ENCODE measurements at regions of chr17 and their contacts with region 1.

Region 1: GRCh38 chr17:30093463-30094147 is 23.0 kb upstream of the NSRP1 start:
- DNase-seq: peak in 11 of 14 experiments; percentile 5 to 74 (median 24)
- ATAC-seq: peak; percentile 51
- H3K4me3 ChIP-seq: no peak overlapping the region
- H3K4me3 Mint-ChIP-seq: no peak overlapping the region
- H3K27ac ChIP-seq: no peak overlapping the region
- H3K27ac Mint-ChIP-seq: no peak overlapping the region
- H3K4me1 ChIP-seq: peaks cover 6% of the 10 kb centered on the region
- H3K4me1 Mint-ChIP-seq: peaks cover 6% of the 10 kb centered on the region
- H3K27me3 ChIP-seq: peaks cover 3 to 4% of the 10 kb centered on the region in 2 experiments
- H3K27me3 Mint-ChIP-seq: peaks cover 26% of the 10 kb centered on the region
- CTCF ChIP-seq: peak; percentile 85

Region 2: DNA sequence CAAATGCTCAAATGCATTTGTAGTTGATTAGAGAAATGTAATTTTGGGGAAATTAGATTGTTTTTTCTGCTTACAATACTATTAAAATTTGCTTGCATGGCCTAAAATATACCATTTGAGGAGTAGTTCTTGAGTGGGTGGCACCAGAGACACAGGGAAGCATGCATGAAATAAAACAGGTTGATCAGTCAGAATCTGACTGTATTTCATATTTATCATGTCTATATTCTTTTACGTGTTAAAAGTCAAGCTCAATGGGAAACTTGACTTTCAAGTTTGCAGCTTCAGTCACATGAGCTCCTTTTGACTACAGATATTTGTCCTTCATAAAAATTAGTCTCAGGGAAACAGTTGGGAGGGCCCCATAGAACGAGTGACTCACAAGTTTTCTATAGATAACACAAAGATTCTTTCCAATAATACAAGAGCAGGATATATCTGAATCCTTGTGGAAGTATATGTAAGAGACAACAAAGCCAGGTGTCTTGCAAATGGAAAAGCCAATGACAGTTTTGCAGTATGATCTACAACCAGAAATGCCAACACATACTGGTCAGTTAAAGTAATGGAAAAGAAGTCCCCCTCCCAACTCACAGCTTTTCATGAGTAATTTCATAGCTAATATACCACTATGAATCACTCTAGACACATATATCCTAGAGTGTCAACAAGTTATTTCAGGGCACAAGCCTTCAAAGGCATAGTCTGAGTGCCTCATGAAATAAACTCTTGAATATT is 428.7 kb before region 1 on chr17:
- CTCF ChIA-PET with region 1: no interaction called
- POLR2A ChIA-PET with region 1: no interaction called
- intact Hi-C with region 1: loop called in 1 of 2 experiments (anchors 10 kb)
- DNase-seq: peak in 2 of 14 experiments; percentile 10 to 21
- ATAC-seq: no peak
- H3K4me3 ChIP-seq: no peak overlapping the region
- H3K4me3 Mint-ChIP-seq: no peak overlapping the region
- H3K27ac ChIP-seq: no peak overlapping the region
- H3K27ac Mint-ChIP-seq: peak overlapping the region; percentile 62
- H3K4me1 ChIP-seq: no peaks in the 10 kb centered on the region
- H3K4me1 Mint-ChIP-seq: peaks cover 22% of the 10 kb centered on the region
- H3K27me3 ChIP-seq: no peaks in the 10 kb centered on the region
- H3K27me3 Mint-ChIP-seq: no peaks in the 10 kb centered on the region
- CTCF ChIP-seq: no peak

Region 3: DNA sequence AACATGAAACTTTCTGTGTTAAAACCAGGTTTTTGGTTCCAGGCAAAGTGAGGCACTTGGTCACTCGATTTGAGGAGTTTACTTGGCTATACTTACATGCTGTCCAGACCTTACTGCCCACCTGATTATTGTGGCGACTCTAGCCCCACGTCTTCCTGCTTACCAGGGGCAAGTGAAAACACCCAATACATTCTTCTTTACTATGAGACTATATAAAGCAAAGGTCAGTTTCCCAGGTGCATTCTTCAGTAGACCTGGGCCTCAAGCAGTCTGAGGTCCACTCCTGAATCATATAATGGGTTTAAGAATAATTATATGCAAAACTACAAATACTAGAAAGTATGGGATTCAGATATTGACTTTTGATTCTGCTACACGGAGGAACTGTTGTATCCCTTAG is 65.9 kb before region 1 on chr17:
- CTCF ChIA-PET with region 1: interaction called, 6 read pairs
- POLR2A ChIA-PET with region 1: no interaction called
- intact Hi-C with region 1: loop called in 1 of 2 experiments (anchors 2 kb)
- DNase-seq: no peak
- ATAC-seq: no peak
- H3K4me3 ChIP-seq: no peak overlapping the region
- H3K4me3 Mint-ChIP-seq: no peak overlapping the region
- H3K27ac ChIP-seq: no peak overlapping the region
- H3K27ac Mint-ChIP-seq: no peak overlapping the region
- H3K4me1 ChIP-seq: no peaks in the 10 kb centered on the region
- H3K4me1 Mint-ChIP-seq: no peaks in the 10 kb centered on the region
- H3K27me3 ChIP-seq: no peaks in the 10 kb centered on the region
- H3K27me3 Mint-ChIP-seq: no peaks in the 10 kb centered on the region
- CTCF ChIP-seq: no peak

Region 4: GRCh38 chr17:30503558-30503957 is 410.0 kb after region 1 on chr17:
- CTCF ChIA-PET with region 1: no interaction called
- POLR2A ChIA-PET with region 1: no interaction called
- intact Hi-C with region 1: no loop called
- DNase-seq: no peak
- ATAC-seq: no peak
- H3K4me3 ChIP-seq: no peak overlapping the region
- H3K4me3 Mint-ChIP-seq: no peak overlapping the region
- H3K27ac ChIP-seq: no peak overlapping the region
- H3K27ac Mint-ChIP-seq: no peak overlapping the region
- H3K4me1 ChIP-seq: no peaks in the 10 kb centered on the region
- H3K4me1 Mint-ChIP-seq: peaks cover 52% of the 10 kb centered on the region
- H3K27me3 ChIP-seq: no peaks in the 10 kb centered on the region
- H3K27me3 Mint-ChIP-seq: no peaks in the 10 kb centered on the region
- CTCF ChIP-seq: no peak